Gastrocnemius medialis (tissue), 4 donors: ENCODE measurements at regions of chr18 and their contacts with region 1.

Region 1: DNA sequence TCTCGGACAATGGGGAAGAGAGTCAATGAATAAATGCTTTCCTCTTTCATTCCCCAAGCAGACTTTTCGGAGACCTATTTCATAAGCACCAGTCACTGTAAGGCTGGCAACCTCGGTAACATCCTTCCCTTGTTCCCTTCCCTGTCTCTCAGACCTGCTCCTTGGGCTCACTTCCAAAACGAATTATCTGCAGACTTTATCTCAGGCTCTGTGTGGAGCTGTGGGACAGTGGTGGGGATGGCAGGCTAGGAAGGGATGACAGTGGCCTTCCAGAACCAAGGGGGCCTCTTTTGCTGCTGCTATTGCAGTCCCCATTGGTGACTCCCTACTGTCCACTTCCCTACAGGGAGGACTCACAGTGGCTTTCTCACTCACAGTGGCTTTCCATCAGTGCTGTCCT is 185.6 kb upstream of the MEX3C start:
- DNase-seq: no peak
- ATAC-seq: no peak
- H3K4me3 ChIP-seq: no peak overlapping the region
- H3K27ac ChIP-seq: no peak overlapping the region
- H3K4me1 ChIP-seq: no peaks in the 10 kb centered on the region
- H3K27me3 ChIP-seq: no peaks in the 10 kb centered on the region
- CTCF ChIP-seq: no peak
- POLR2A ChIP-seq: no peak

Region 2: DNA sequence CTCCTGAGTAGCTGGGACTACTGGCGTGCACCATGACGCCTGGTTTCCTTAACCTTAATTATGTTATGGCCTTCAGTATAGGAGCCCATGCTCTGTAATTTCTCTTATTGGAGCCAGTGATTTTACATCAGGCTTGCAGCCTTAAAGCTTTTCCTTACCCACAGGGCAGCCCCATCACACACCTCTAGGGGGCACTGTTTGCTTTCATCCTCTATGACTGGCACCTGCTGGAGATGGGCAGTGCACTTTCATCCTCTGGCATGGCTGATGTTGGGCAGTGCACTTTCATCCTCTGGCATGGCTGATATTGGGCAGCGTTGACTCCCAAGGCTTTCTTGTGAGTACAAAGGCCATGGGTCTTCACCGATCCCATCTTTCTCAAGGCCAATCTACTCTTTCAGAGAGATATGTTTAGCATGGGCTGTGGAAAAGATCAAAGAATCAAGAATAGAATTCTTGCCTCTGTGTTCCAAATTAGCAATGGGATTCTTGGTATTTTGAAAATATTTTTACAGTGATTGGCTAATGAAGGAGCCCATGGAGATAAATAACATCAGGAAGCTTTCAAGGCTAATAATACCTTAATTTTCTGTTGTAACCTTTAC is 105.0 kb before region 1 on chr18:
- in situ Hi-C with region 1: no loop called
- intact Hi-C with region 1: loop called (anchors 10 kb)
- DNase-seq: no peak
- ATAC-seq: no peak
- H3K4me3 ChIP-seq: no peak overlapping the region
- H3K27ac ChIP-seq: no peak overlapping the region
- H3K4me1 ChIP-seq: no peaks in the 10 kb centered on the region
- H3K27me3 ChIP-seq: no peaks in the 10 kb centered on the region
- CTCF ChIP-seq: peak in 4 of 5 experiments; percentile 17 to 54 (median 26)
- POLR2A ChIP-seq: no peak

Region 3: GRCh38 chr18:51498085-51498855 is 115.2 kb after region 1 on chr18:
- in situ Hi-C with region 1: no loop called
- intact Hi-C with region 1: no loop called
- DNase-seq: no peak
- ATAC-seq: no peak
- H3K4me3 ChIP-seq: no peak overlapping the region
- H3K27ac ChIP-seq: no peak overlapping the region
- H3K4me1 ChIP-seq: no peaks in the 10 kb centered on the region
- H3K27me3 ChIP-seq: peaks cover 0 to 3% (median 0%) of the 10 kb centered on the region in 3 donors
- CTCF ChIP-seq: no peak
- POLR2A ChIP-seq: no peak